H1 (cell line): ENCODE measurements at regions of chr2 and their contacts with region 1.

Region 1: GRCh38 chr2:158745044-158745865 is 49.9 kb upstream of the DAPL1 start:
- DNase-seq: peak; percentile 7 to 78
- H3K4me3 ChIP-seq: peak overlapping the region; percentile 22 to 50 (median 40); a peak in 6 of 8 replicates
- H3K27ac ChIP-seq: no peak overlapping the region
- H3K4me1 ChIP-seq: peaks cover 5 to 11% (median 6%) of the 10 kb centered on the region in 4 experiments
- H3K27me3 ChIP-seq: no peaks in the 10 kb centered on the region; a peak in 1 of 7 replicates
- CTCF ChIP-seq: peak in 2 of 3 experiments; percentile 69; a peak in 3 of 4 replicates
- EP300 ChIP-seq: no peak
- POLR2A ChIP-seq: peak in 1 of 2 experiments; percentile 55; a peak in 1 of 3 replicates
- RAD21 ChIP-seq: peak; percentile 84 to 85

Region 2: DNA sequence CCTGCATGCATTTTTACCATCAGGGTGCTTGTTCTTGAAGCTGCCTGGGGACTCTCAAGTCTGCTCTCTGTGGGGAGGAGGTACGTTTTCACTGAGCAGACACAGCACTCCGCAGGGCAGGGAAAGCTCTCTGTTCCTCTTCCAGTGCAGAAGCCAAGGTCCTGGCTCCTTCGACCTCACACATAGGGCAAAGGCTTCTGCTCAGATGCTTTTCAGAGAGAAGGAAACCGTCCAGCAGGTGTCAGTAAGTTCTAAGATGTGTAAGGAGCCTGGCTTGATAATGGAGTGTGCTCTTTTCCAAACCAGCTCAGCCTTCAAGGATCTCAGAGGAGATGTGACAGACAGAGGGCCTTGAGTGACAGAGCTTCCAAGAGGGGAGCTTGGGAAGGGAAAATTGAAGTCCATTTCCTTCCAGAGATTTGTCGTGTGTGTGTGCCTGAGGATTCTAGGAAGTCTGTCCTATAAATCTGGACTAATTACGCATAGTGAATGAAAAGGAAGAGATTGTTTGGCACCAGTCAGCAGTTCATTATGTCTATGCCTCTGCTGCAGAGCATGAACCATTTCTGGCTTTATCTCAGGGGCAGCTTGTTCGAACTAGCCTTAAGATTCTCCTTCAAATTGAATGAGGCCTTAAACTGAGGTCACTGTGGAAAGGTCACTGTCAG is 710.9 kb before region 1 on chr2:
- CTCF ChIA-PET with region 1: interaction called, 89 read pairs
- POLR2A ChIA-PET with region 1: no interaction called
- DNase-seq: no peak
- H3K4me3 ChIP-seq: no peak overlapping the region
- H3K27ac ChIP-seq: no peak overlapping the region
- H3K4me1 ChIP-seq: no peaks in the 10 kb centered on the region
- H3K27me3 ChIP-seq: no peaks in the 10 kb centered on the region
- CTCF ChIP-seq: peak in 2 of 3 experiments; percentile 80 to 81; a peak in 3 of 4 replicates
- EP300 ChIP-seq: no peak
- POLR2A ChIP-seq: no peak
- RAD21 ChIP-seq: peak; percentile 90 to 94

Region 3: GRCh38 chr2:158667586-158667985 is 77.7 kb before region 1 on chr2:
- CTCF ChIA-PET with region 1: interaction called, 33 read pairs
- POLR2A ChIA-PET with region 1: no interaction called
- DNase-seq: no peak
- H3K4me3 ChIP-seq: no peak overlapping the region
- H3K27ac ChIP-seq: no peak overlapping the region
- H3K4me1 ChIP-seq: no peaks in the 10 kb centered on the region
- H3K27me3 ChIP-seq: no peaks in the 10 kb centered on the region
- CTCF ChIP-seq: no peak
- EP300 ChIP-seq: no peak
- POLR2A ChIP-seq: no peak
- RAD21 ChIP-seq: no peak

Region 4: DNA sequence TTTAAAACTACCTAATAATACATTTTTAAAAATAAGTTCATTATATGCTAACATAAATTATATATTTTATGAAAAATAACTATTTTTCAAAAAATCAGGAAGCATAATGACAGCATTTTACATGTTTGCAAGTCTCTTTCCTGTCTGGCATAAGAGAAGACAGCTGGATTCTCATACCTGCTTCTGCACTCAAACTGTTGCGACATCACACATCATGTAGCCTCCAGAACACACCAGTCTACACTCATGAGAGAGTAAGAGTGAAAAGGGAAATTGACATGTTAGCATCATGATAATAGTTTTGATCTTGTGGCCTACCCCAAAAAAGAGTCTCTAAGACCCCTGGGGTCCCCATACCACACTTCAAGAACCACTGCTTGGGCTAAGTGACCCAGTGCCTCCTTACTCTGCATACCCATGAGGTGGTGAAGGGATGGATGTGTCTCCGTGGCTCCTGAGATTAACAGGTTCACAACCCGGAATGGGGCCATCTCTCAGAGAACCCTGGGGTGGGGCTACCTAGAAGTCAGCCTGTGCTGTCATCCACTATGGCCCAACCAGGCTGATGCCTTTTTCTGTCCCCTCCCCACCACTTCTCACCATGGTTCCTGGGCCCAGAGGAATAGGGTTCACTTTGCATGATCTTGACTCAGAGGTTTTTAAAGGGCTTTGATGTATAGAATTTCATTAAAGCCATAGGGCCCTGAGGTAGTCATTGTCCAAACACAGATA is 52.7 kb before region 1 on chr2:
- CTCF ChIA-PET with region 1: interaction called, 10 read pairs
- POLR2A ChIA-PET with region 1: no interaction called
- DNase-seq: no peak
- H3K4me3 ChIP-seq: no peak overlapping the region
- H3K27ac ChIP-seq: no peak overlapping the region
- H3K4me1 ChIP-seq: no peaks in the 10 kb centered on the region; a peak in 2 of 7 replicates
- H3K27me3 ChIP-seq: no peaks in the 10 kb centered on the region
- CTCF ChIP-seq: no peak
- EP300 ChIP-seq: no peak
- POLR2A ChIP-seq: no peak
- RAD21 ChIP-seq: no peak

Region 5: DNA sequence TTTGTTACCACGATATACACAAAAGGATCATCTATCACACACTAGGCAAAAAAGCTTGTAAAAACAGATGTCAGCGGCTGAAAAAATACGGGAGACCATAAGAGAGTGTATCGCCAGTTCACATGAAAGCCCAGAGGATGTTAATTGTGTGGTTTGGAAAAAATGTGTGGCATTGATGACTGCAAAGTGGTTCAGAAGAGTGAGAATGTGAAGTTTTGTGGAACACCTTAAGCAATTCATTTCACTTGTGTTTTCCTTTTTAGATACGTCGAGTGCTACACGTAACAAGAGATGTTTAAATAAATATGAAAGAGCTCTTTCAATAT is 11.9 kb before region 1 on chr2:
- CTCF ChIA-PET with region 1: interaction called, 416 read pairs
- POLR2A ChIA-PET with region 1: interaction called, 3 read pairs
- DNase-seq: no peak
- H3K4me3 ChIP-seq: no peak overlapping the region
- H3K27ac ChIP-seq: no peak overlapping the region
- H3K4me1 ChIP-seq: no peaks in the 10 kb centered on the region
- H3K27me3 ChIP-seq: no peaks in the 10 kb centered on the region; a peak in 1 of 7 replicates
- CTCF ChIP-seq: no peak
- EP300 ChIP-seq: no peak
- POLR2A ChIP-seq: no peak
- RAD21 ChIP-seq: no peak